H1 (cell line): ENCODE measurements at regions of chr7 and their contacts with region 1.

Region 1: GRCh38 chr7:129918922-129919321 is 33.8 kb downstream of the UBE2H start:
- DNase-seq: no peak
- H3K4me3 ChIP-seq: no peak overlapping the region
- H3K27ac ChIP-seq: no peak overlapping the region
- H3K4me1 ChIP-seq: peaks cover 0 to 3% (median 0%) of the 10 kb centered on the region in 4 experiments; a peak in 2 of 7 replicates
- H3K27me3 ChIP-seq: no peaks in the 10 kb centered on the region
- CTCF ChIP-seq: no peak
- EP300 ChIP-seq: no peak
- POLR2A ChIP-seq: no peak
- RAD21 ChIP-seq: no peak

Region 2: DNA sequence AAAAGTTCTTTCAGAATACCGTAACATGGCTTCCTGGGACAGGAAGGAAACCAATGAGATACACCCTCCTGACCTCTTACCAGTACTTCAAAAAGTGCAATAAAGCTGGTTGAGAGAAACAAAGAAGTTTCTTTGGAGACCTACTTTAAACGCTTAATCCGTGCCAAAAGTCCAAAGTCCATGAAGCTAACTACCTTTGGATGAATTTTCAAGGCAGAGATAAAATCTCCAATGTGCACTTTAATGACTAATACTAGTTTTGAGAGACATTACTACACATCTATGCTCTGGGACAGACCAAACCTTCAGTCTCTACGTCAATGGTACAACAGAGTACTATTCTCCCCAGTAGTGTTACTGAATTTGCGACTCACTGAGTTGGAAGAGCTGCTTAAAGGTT is 12.2 kb before region 1 on chr7:
- CTCF ChIA-PET with region 1: interaction called, 14 read pairs
- POLR2A ChIA-PET with region 1: interaction called, 4 read pairs
- DNase-seq: no peak
- H3K4me3 ChIP-seq: no peak overlapping the region
- H3K27ac ChIP-seq: no peak overlapping the region
- H3K4me1 ChIP-seq: peaks cover 0 to 8% (median 5%) of the 10 kb centered on the region in 4 experiments; a peak in 5 of 7 replicates
- H3K27me3 ChIP-seq: no peaks in the 10 kb centered on the region
- CTCF ChIP-seq: no peak
- EP300 ChIP-seq: no peak
- POLR2A ChIP-seq: no peak
- RAD21 ChIP-seq: no peak

Region 3: GRCh38 chr7:130096243-130096827 is 177.4 kb after region 1 on chr7:
- CTCF ChIA-PET with region 1: no interaction called
- POLR2A ChIA-PET with region 1: no interaction called
- DNase-seq: no peak
- H3K4me3 ChIP-seq: no peak overlapping the region
- H3K27ac ChIP-seq: no peak overlapping the region
- H3K4me1 ChIP-seq: no peaks in the 10 kb centered on the region
- H3K27me3 ChIP-seq: no peaks in the 10 kb centered on the region; a peak in 1 of 7 replicates
- CTCF ChIP-seq: no peak
- EP300 ChIP-seq: no peak
- POLR2A ChIP-seq: no peak
- RAD21 ChIP-seq: no peak

Region 4: DNA sequence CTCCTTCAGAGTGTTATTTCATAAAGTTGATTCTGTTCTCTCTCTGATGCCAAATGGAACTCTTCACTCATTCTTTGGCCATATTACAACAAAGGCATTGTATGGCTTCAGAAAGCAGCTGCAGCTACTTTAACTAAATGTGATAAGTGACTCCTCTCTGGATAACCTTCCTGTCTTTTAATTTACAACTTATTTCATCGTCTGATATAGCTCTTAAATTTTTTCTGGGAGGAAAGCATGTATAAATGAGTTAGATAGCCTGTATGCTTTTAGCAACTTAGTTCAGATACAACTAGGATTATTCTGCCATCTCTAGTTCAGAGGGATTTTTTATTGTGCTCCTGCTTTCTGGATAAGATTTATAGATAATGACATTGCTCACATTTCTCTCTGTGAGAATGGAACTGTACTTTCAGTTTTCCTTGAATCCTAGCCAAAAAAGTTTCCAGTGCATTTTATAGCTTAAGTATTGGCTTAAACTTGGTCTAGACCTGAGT is 208.9 kb after region 1 on chr7:
- CTCF ChIA-PET with region 1: no interaction called
- POLR2A ChIA-PET with region 1: no interaction called
- DNase-seq: no peak
- H3K4me3 ChIP-seq: no peak overlapping the region
- H3K27ac ChIP-seq: no peak overlapping the region; the same call in 1 of the 2 replicates
- H3K4me1 ChIP-seq: no peaks in the 10 kb centered on the region
- H3K27me3 ChIP-seq: no peaks in the 10 kb centered on the region
- CTCF ChIP-seq: no peak
- EP300 ChIP-seq: no peak
- POLR2A ChIP-seq: no peak
- RAD21 ChIP-seq: no peak